Natural killer cell (primary cell): ENCODE measurements at regions of chr12 and their contacts with region 1.

Region 1: GRCh38 chr12:98593351-98594049 is at the start of gene SLC25A3:
- DNase-seq: peak; percentile 91 to 99
- ATAC-seq: peak; percentile 94 to 100 (median 97)
- H3K4me3 ChIP-seq: peak within 1 kb of the TSS; percentile 63
- H3K4me3 Mint-ChIP-seq: peak within 1 kb of the TSS; percentile 98
- H3K27ac ChIP-seq: peak within 1 kb of the TSS; percentile 89
- H3K27ac Mint-ChIP-seq: peak within 1 kb of the TSS; percentile 92 to 99
- H3K4me1 ChIP-seq: peaks cover 7% of the 10 kb centered on the region
- H3K4me1 Mint-ChIP-seq: peaks cover 34 to 36% of the 10 kb centered on the region in 2 donors
- H3K27me3 ChIP-seq: no peaks in the 10 kb centered on the region
- H3K27me3 Mint-ChIP-seq: no peaks in the 10 kb centered on the region
- CTCF ChIP-seq: no peak
- total RNA-seq, gene SLC25A3: 393 to 490 (median 433) TPM

Region 2: DNA sequence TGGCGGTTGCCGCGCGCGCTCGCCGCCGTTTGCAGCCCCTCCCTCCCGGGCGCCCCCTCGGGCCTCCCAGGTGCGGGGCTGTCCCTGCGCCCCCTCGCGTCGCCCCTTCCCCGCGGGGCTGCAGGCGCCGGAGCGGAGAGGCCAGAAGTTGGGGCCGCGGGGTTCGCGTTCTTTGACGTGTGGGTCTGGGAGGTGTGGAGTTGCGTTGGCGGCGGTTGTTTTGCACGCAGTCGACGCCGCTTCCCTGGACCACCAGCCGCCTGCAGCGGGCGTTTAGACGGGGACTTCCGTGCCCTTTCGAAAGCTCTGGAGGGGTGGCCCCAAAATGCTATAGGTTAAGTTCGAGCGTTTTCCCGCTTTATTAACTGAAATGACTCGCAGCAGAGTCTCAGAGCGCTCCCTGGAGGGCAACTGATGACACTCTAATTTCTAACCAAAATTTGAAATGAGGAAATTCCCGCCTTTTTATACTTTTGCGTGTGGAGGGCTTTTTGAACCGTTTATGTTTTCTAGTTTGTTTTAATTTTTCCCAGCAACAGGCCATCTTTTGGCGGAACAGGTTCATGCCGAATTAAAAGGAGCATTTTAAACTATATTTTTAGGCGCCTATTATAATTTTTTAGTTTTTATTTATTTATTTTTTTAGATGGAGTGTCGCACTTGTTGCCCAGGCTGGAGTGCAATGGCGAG is 77.2 kb before region 1 on chr12:
- intact Hi-C with region 1: loop called (anchors 2 kb)
- DNase-seq: peak; percentile 67 to 94
- ATAC-seq: peak; percentile 68 to 82 (median 69)
- H3K4me3 ChIP-seq: peak overlapping the region; percentile 49
- H3K4me3 Mint-ChIP-seq: peak overlapping the region; percentile 99
- H3K27ac ChIP-seq: peak overlapping the region; percentile 75
- H3K27ac Mint-ChIP-seq: peak overlapping the region; percentile 94 to 97
- H3K4me1 ChIP-seq: peaks cover 33% of the 10 kb centered on the region
- H3K4me1 Mint-ChIP-seq: peaks cover 31 to 36% of the 10 kb centered on the region in 2 donors
- H3K27me3 ChIP-seq: no peaks in the 10 kb centered on the region
- H3K27me3 Mint-ChIP-seq: no peaks in the 10 kb centered on the region
- CTCF ChIP-seq: peak; percentile 76

Region 3: GRCh38 chr12:98543701-98544100 is 49.8 kb before region 1 on chr12:
- intact Hi-C with region 1: no loop called
- DNase-seq: no peak
- ATAC-seq: no peak
- H3K4me3 ChIP-seq: no peak overlapping the region
- H3K4me3 Mint-ChIP-seq: no peak overlapping the region
- H3K27ac ChIP-seq: no peak overlapping the region
- H3K27ac Mint-ChIP-seq: no peak overlapping the region
- H3K4me1 ChIP-seq: no peaks in the 10 kb centered on the region
- H3K4me1 Mint-ChIP-seq: peaks cover 0 to 5% of the 10 kb centered on the region in 2 donors
- H3K27me3 ChIP-seq: no peaks in the 10 kb centered on the region
- H3K27me3 Mint-ChIP-seq: no peaks in the 10 kb centered on the region
- CTCF ChIP-seq: no peak

Region 4: DNA sequence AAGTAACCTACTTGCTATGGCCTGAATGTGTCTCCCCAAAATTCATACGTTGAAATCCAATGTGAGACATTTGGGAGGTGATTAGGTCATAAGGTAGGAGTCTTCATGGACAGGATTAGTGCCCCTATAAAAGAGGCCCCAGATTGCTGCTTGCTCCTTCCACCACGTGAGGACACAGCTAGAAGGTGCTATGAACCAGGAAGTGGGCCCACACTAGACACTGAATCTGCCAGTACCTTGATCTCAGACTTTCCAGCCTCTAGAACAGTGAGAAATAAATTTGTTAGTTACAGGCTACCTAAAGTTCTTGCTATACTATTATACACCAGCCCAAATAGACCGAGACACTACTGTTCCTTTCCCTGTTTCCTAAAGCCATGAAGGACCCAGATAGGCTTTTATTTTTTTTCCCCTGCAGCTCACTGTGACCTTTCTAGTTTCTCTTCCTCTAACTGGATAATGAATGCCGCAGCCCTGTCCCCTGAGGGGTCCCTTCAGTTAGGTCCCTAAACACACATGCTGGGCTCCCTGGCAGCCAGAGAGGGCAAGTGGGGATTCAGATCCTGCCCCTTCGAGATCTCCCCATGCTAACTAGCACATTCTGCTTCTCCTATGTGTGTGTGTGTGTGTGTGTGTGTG is 19.3 kb after region 1 on chr12:
- intact Hi-C with region 1: loop called (anchors 2 kb)
- DNase-seq: peak in 1 of 2 donors; percentile 35
- ATAC-seq: peak; percentile 85 to 97 (median 96)
- H3K4me3 ChIP-seq: no peak overlapping the region
- H3K4me3 Mint-ChIP-seq: peak overlapping the region; percentile 45
- H3K27ac ChIP-seq: peak overlapping the region; percentile 56
- H3K27ac Mint-ChIP-seq: peak overlapping the region; percentile 86 to 91
- H3K4me1 ChIP-seq: peaks cover 13% of the 10 kb centered on the region
- H3K4me1 Mint-ChIP-seq: peaks cover 8 to 9% of the 10 kb centered on the region in 2 donors
- H3K27me3 ChIP-seq: no peaks in the 10 kb centered on the region
- H3K27me3 Mint-ChIP-seq: no peaks in the 10 kb centered on the region
- CTCF ChIP-seq: no peak

Region 5: GRCh38 chr12:98644711-98645402 is 51.4 kb after region 1 on chr12 and contains the starts of genes APAF1 and IKBIP:
- intact Hi-C with region 1: loop called (anchors 1 kb)
- DNase-seq: peak; percentile 98
- ATAC-seq: peak; percentile 87 to 98 (median 89)
- H3K4me3 ChIP-seq: peak within 1 kb of the TSS; percentile 82
- H3K4me3 Mint-ChIP-seq: peak within 1 kb of the TSS; percentile 99
- H3K27ac ChIP-seq: peak within 1 kb of the TSS; percentile 77
- H3K27ac Mint-ChIP-seq: peak within 1 kb of the TSS; percentile 94 to 99
- H3K4me1 ChIP-seq: peaks cover 4% of the 10 kb centered on the region
- H3K4me1 Mint-ChIP-seq: peaks cover 25 to 27% of the 10 kb centered on the region in 2 donors
- H3K27me3 ChIP-seq: no peaks in the 10 kb centered on the region
- H3K27me3 Mint-ChIP-seq: no peaks in the 10 kb centered on the region
- CTCF ChIP-seq: no peak
- total RNA-seq, gene APAF1: 33.5 to 43.7 (median 34.9) TPM
- total RNA-seq, gene IKBIP: 3.9 to 6.3 (median 4.6) TPM

Region 6: GRCh38 chr12:98671459-98671858 is 78.0 kb after region 1 on chr12:
- intact Hi-C with region 1: no loop called
- DNase-seq: no peak
- ATAC-seq: no peak
- H3K4me3 ChIP-seq: no peak overlapping the region
- H3K4me3 Mint-ChIP-seq: no peak overlapping the region
- H3K27ac ChIP-seq: no peak overlapping the region
- H3K27ac Mint-ChIP-seq: peak overlapping the region in 1 of 2 donors; percentile 52
- H3K4me1 ChIP-seq: peaks cover 3% of the 10 kb centered on the region
- H3K4me1 Mint-ChIP-seq: peaks cover 21 to 22% of the 10 kb centered on the region in 2 donors
- H3K27me3 ChIP-seq: no peaks in the 10 kb centered on the region
- H3K27me3 Mint-ChIP-seq: no peaks in the 10 kb centered on the region
- CTCF ChIP-seq: no peak